ENCODE measurements at regions of chr13 and their contacts with region 1.

Region 1: DNA sequence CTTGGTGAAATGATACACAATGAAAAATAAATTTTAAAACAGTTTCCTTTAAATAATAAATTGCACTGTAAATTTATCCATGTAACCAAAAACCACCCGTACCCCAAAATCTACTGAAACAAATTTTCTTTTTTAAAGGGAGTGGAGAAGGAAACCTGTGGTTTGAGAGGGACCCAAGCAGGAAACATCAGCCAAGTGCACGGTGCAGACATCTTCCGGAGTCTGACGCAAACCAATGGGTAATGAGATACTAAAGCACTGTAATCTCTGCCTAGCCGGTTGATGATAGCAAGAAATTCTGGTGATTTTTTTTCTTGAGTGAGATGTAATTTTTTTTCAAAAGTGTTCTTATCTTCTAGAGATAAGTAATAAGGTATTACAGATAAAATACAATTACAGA is 115.4 kb downstream of the ABCC4 start:
- DNase-seq: peak; percentile 6 to 33 (median 16)
- H3K4me3 ChIP-seq: peak overlapping the region in 1 of 3 experiments; percentile 20
- H3K4me3 Mint-ChIP-seq: peak overlapping the region in 1 of 2 donors; percentile 9
- H3K27ac ChIP-seq: no peak overlapping the region
- H3K27ac Mint-ChIP-seq: peak overlapping the region in 2 of 7 donors; percentile 51 to 59
- H3K4me1 ChIP-seq: peaks cover 19 to 24% of the 10 kb centered on the region in 2 donors
- H3K4me1 Mint-ChIP-seq: peaks cover 29% of the 10 kb centered on the region
- H3K27me3 ChIP-seq: no peaks in the 10 kb centered on the region
- H3K27me3 Mint-ChIP-seq: no peaks in the 10 kb centered on the region
- CTCF ChIP-seq: no peak

Region 2: GRCh38 chr13:95382411-95382810 is 196.6 kb after region 1 on chr13:
- intact Hi-C with region 1: loop called in 1 of 2 experiments (anchors 5 kb)
- DNase-seq: no peak
- H3K4me3 ChIP-seq: no peak overlapping the region
- H3K4me3 Mint-ChIP-seq: no peak overlapping the region
- H3K27ac ChIP-seq: no peak overlapping the region
- H3K27ac Mint-ChIP-seq: no peak overlapping the region
- H3K4me1 ChIP-seq: peaks cover 21 to 23% of the 10 kb centered on the region in 2 donors
- H3K4me1 Mint-ChIP-seq: peaks cover 30% of the 10 kb centered on the region
- H3K27me3 ChIP-seq: no peaks in the 10 kb centered on the region
- H3K27me3 Mint-ChIP-seq: no peaks in the 10 kb centered on the region
- CTCF ChIP-seq: no peak